SK-N-SH (cell line): ENCODE measurements at regions of chr17 and their contacts with region 1.

Region 1: DNA sequence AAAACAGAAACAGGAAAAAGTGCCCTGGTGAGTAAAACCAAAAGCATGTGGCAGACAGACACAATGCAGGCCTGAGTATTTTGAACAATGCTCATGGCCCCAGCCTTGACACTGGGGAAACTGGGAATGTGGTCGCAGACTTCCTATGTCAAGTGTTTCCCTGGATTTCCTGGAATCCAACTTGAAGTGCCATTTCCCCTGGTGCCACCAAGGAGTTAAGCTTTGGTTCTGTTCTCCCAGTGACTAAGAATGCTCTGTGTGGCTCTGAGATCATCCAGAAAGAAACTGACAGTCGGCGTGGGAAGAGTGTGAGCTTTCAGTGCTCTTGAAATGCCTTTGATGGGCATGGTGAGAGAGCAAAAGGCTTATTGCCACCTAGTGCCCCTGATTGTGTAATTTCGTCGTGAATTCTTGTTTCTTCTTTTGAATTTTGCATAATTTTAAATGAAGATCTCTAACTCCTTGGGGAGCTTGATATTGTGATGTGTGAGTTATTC is 96.0 kb downstream of the YPEL2 start:
- DNase-seq: no peak
- H3K4me3 ChIP-seq: no peak overlapping the region
- H3K27ac ChIP-seq: peak overlapping the region; percentile 56 to 82; a peak in 3 of 4 replicates
- H3K4me1 ChIP-seq: peaks cover 13 to 47% of the 10 kb centered on the region in 2 experiments
- H3K27me3 ChIP-seq: no peaks in the 10 kb centered on the region
- CTCF ChIP-seq: peak; percentile 33
- EP300 ChIP-seq: 0 out of 4 replicates have a peak, but pooled peaks of 1 of the 2 experiments have one; percentile 17
- RAD21 ChIP-seq: peak; percentile 54

Region 2: DNA sequence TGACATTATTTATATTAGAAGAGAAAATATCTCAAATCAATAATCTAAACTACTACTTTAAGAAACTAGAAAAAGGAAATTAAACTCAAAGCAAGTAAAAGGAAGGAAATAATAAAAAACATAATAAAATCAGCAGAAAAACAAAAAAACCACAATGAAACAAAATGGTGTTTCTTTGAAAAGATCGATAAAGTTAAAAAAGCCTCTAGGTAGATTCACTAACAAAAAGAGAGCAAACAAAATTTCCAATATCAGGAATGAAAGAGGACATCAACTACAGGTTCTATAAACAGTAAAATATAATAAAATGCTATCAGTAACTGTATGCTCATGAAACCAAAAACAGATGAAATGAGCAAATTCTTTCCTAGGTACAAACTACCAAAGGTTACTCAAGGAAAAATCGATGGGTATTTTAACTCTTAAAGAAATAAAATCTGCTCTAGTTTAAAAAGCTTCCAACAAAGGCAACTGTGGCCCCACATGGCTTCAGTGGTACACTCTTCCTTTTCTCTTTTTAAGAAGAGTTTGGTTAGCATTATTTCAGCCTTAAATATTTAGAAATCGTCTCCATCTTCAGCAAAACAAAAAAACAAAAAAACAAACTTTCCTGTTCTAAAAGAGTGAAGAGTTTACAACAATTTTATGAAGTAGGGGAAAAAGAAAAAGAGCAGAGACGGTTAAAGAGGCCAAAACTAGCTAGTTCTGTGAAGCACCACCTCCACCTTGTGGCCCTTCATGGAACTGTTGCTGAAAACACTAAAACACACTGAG is 422.9 kb before region 1 on chr17:
- CTCF ChIA-PET with region 1: no interaction called
- POLR2A ChIA-PET with region 1: no interaction called
- DNase-seq: peak; percentile 63
- H3K4me3 ChIP-seq: no peak overlapping the region; a peak in 1 of 4 replicates
- H3K27ac ChIP-seq: no peak overlapping the region
- H3K4me1 ChIP-seq: peaks cover 0 to 5% of the 10 kb centered on the region in 2 experiments; a peak in 2 of 4 replicates
- H3K27me3 ChIP-seq: no peaks in the 10 kb centered on the region
- CTCF ChIP-seq: peak; percentile 100
- EP300 ChIP-seq: no peak
- RAD21 ChIP-seq: peak; percentile 98

Region 3: GRCh38 chr17:59400858-59401257 is 26.6 kb before region 1 on chr17:
- CTCF ChIA-PET with region 1: interaction called, 17 read pairs
- POLR2A ChIA-PET with region 1: interaction called, 7 read pairs
- DNase-seq: no peak
- H3K4me3 ChIP-seq: no peak overlapping the region
- H3K27ac ChIP-seq: peak overlapping the region; percentile 9 to 91; a peak in 2 of 4 replicates
- H3K4me1 ChIP-seq: peaks cover under 1 to 38% of the 10 kb centered on the region in 2 experiments; a peak in 2 of 4 replicates
- H3K27me3 ChIP-seq: no peaks in the 10 kb centered on the region
- CTCF ChIP-seq: no peak
- EP300 ChIP-seq: no peak
- RAD21 ChIP-seq: no peak; the same call in 1 of the 2 replicates

Region 4: DNA sequence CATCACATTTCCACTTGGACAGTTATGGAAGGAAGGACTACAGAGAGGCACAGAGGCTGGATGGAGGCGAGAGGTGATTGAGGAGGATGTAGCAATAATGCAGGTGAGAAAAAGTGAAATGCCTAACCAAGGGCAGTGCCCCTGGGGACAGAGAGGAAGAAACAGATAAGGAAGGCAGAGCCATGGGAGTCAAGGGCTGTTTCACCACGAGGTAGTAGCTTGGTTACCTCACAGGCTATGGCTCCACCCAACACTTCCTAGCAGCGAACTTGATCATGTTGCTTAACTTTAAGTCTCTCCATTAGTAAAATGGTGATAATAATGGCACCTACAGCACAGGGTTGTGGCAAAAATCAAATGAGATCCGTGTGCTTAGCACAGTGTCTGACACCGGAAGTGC is 12.1 kb before region 1 on chr17:
- CTCF ChIA-PET with region 1: interaction called, 19 read pairs
- POLR2A ChIA-PET with region 1: interaction called, 5 read pairs
- DNase-seq: no peak
- H3K4me3 ChIP-seq: no peak overlapping the region
- H3K27ac ChIP-seq: no peak overlapping the region
- H3K4me1 ChIP-seq: peaks cover 0 to 3% of the 10 kb centered on the region in 2 experiments; a peak in 1 of 4 replicates
- H3K27me3 ChIP-seq: no peaks in the 10 kb centered on the region
- CTCF ChIP-seq: no peak
- EP300 ChIP-seq: no peak
- RAD21 ChIP-seq: no peak